ENCODE measurements at regions of chr22 and their contacts with region 1.

Region 1: DNA sequence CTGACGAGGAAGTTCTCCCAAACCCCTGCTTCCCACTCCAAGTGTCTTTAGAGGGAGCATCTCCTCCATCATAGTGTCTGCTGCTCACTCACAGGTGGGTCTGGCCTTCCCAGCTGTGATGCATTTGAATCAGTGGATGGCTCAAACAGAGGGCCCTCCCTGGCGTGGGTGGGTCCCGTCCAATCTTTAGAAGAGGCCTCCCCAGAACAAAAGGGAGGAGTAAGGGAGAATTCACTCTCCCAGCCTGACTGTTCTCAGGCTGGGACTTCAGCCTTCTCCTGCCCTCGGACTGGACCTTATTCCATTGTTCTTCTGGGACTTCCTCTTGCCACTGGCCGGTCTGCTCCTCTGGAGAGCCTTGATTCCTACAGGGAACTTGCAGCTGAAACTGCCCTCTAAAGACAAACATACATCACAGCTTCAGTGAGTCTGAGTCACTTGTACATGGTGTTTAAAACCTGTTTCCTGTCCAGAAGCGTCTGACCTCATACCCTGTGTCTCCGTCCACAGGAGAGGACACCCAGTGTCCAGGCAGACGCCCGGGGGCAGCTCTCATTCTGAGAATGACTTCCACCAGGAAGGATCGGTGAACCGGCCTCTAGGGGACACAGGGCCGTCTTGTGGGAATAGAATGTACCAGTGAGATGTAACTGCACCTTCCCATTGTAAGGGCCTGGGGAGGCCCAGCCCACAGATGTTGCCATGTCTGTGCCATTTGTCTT is 234.7 kb downstream of the BRD1 start:
- DNase-seq: no peak
- H3K4me3 ChIP-seq: no peak overlapping the region
- H3K27ac ChIP-seq: no peak overlapping the region
- H3K4me1 ChIP-seq: no peaks in the 10 kb centered on the region
- H3K27me3 ChIP-seq: no peaks in the 10 kb centered on the region
- CTCF ChIP-seq: no peak

Region 2: GRCh38 chr22:49235463-49236300 is 357.3 kb before region 1 on chr22:
- CTCF ChIA-PET with region 1: no interaction called
- dilution Hi-C with region 1: no loop called
- in situ Hi-C with region 1: no loop called
- intact Hi-C with region 1: no loop called
- DNase-seq: no peak
- H3K4me3 ChIP-seq: no peak overlapping the region
- H3K27ac ChIP-seq: no peak overlapping the region
- H3K4me1 ChIP-seq: no peaks in the 10 kb centered on the region
- H3K27me3 ChIP-seq: no peaks in the 10 kb centered on the region
- CTCF ChIP-seq: no peak

Region 3: DNA sequence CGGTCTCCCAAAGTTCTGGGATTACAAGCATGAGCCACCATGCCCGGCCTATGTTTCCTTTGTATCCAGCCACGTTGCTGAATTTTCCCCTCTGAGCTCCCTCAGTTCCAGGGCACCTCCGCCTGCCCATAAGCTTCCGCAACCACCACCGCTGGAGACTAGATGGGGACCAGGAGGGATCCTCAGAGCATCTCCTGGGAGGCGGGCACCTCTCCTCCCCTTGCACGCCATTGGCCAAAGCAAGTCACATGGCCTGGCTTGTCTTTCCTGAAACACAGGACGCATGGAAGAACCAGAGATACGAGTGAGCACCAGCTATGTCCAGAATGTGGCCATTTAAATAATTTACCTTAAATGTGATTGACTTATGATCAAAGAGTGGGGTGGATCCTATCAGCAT is 153.6 kb before region 1 on chr22:
- CTCF ChIA-PET with region 1: no interaction called
- dilution Hi-C with region 1: loop called (anchors 5 kb)
- in situ Hi-C with region 1: no loop called
- intact Hi-C with region 1: no loop called
- DNase-seq: no peak
- H3K4me3 ChIP-seq: no peak overlapping the region
- H3K27ac ChIP-seq: no peak overlapping the region
- H3K4me1 ChIP-seq: no peaks in the 10 kb centered on the region
- H3K27me3 ChIP-seq: no peaks in the 10 kb centered on the region
- CTCF ChIP-seq: no peak

Region 4: GRCh38 chr22:49667236-49667635 is 74.3 kb after region 1 on chr22:
- CTCF ChIA-PET with region 1: no interaction called
- dilution Hi-C with region 1: loop called (anchors 5 kb)
- in situ Hi-C with region 1: no loop called
- intact Hi-C with region 1: no loop called
- DNase-seq: no peak
- H3K4me3 ChIP-seq: no peak overlapping the region
- H3K27ac ChIP-seq: no peak overlapping the region
- H3K4me1 ChIP-seq: no peaks in the 10 kb centered on the region
- H3K27me3 ChIP-seq: peaks cover 2% of the 10 kb centered on the region
- CTCF ChIP-seq: no peak

Measured in mammary epithelial cell (primary cell).